B cell (primary cell): ENCODE measurements at regions of chr2 and their contacts with region 1.

Region 1: GRCh38 chr2:231056453-231057424 is at the start of gene PSMD1:
- DNase-seq: peak; percentile 98
- ATAC-seq: peak; percentile 87
- H3K4me3 ChIP-seq: peak within 1 kb of the TSS; percentile 75 to 99 (median 90)
- H3K4me3 Mint-ChIP-seq: peak within 1 kb of the TSS; percentile 100
- H3K27ac ChIP-seq: peak within 1 kb of the TSS; percentile 85 to 86
- H3K27ac Mint-ChIP-seq: peak within 1 kb of the TSS; percentile 100
- H3K4me1 ChIP-seq: peaks cover 22 to 27% of the 10 kb centered on the region in 2 donors
- H3K4me1 Mint-ChIP-seq: peaks cover 39% of the 10 kb centered on the region
- H3K27me3 ChIP-seq: peaks cover 0 to 6% (median 0%) of the 10 kb centered on the region in 4 experiments
- H3K27me3 Mint-ChIP-seq: peaks cover 16% of the 10 kb centered on the region
- CTCF ChIP-seq: peak; percentile 91
- total RNA-seq, gene PSMD1: 45.4 and 48.2 TPM in 2 replicates

Region 2: DNA sequence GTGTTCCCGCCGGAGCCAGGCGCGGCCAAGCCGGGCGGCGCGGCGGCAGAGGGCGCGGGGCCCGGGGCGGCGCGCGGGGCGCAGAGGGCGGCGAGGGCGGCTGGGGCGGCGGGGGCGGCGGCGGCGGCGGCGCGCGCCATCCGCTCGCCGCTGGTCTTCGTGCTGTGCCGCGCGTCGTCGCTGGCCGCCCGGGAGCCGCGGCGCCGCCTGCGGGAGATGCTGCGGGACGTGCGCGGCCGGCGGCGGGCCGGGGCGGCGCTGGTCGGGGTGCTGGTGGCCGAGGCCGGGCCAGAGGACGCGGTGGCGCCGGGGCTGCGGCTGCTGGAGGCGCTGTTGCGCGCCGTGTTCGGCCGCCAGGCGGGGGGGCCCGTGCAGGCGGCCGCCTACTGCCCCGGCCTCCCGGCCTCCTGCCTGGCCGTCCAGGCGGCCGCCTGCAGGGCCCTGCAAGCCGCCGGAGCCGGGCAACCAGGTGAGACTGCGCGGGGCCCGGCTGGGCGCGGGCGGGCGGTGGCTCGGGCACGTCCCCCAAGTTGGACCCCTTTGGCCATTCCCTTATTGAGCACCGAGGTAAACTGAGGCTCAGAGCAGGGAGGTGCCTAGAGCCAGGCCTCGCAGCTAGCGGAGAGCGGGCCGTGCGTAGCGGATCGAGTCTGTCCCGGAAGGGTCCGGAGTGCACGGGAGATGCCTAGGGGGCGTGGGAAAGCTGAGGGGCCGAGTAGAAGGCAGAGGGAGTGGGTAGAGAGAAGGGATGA is 18.8 kb before region 1 on chr2:
- CTCF ChIA-PET with region 1: interaction called, 3 read pairs
- POLR2A ChIA-PET with region 1: no interaction called
- intact Hi-C with region 1: loop called (anchors 2 kb)
- DNase-seq: peak; percentile 32
- ATAC-seq: peak; percentile 23
- H3K4me3 ChIP-seq: no peak overlapping the region
- H3K4me3 Mint-ChIP-seq: peak overlapping the region; percentile 66
- H3K27ac ChIP-seq: no peak overlapping the region
- H3K27ac Mint-ChIP-seq: no peak overlapping the region
- H3K4me1 ChIP-seq: peaks cover 14 to 16% of the 10 kb centered on the region in 2 donors
- H3K4me1 Mint-ChIP-seq: peaks cover 12% of the 10 kb centered on the region
- H3K27me3 ChIP-seq: peaks cover 0 to 43% (median 16%) of the 10 kb centered on the region in 4 experiments
- H3K27me3 Mint-ChIP-seq: peaks cover 62% of the 10 kb centered on the region
- CTCF ChIP-seq: no peak

Region 3: DNA sequence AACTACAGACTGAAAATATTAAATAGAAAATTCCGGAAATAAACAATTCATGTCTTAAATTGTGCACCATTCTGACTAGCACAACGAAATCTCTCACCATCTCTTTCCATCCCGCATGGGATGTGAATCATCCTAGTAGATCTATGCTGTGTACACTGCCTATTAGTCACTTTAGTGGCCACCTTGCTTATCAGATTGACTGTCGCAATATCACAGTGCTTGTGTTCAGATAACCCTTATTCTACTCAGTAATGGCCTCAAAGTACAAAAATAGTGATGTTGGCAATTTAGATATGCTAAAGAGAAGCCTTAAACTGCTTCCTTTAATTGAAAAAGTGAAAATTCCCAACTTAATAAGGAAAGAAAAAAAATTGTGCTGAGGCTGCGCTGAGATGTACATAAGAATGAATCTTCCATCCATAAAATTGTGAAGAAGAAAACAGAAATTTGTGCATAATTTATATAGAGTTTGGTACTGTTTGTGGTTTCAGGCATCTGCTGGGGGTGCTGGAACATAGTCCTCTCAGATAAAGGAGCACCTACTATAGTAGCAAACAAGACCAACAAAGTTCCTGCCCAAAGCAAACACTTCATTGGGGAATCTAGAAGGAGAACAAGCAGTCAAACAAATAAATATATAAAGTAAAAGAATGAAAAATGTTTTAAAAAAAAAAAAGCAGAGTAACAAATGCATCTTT is 11.9 kb after region 1 on chr2:
- CTCF ChIA-PET with region 1: interaction called, 13 read pairs
- POLR2A ChIA-PET with region 1: no interaction called
- intact Hi-C with region 1: no loop called
- DNase-seq: no peak
- ATAC-seq: no peak
- H3K4me3 ChIP-seq: no peak overlapping the region
- H3K4me3 Mint-ChIP-seq: no peak overlapping the region
- H3K27ac ChIP-seq: no peak overlapping the region
- H3K27ac Mint-ChIP-seq: no peak overlapping the region
- H3K4me1 ChIP-seq: no peaks in the 10 kb centered on the region
- H3K4me1 Mint-ChIP-seq: no peaks in the 10 kb centered on the region
- H3K27me3 ChIP-seq: no peaks in the 10 kb centered on the region
- H3K27me3 Mint-ChIP-seq: no peaks in the 10 kb centered on the region
- CTCF ChIP-seq: no peak